ENCODE measurements at regions of chrX and their contacts with region 1.

Region 1: DNA sequence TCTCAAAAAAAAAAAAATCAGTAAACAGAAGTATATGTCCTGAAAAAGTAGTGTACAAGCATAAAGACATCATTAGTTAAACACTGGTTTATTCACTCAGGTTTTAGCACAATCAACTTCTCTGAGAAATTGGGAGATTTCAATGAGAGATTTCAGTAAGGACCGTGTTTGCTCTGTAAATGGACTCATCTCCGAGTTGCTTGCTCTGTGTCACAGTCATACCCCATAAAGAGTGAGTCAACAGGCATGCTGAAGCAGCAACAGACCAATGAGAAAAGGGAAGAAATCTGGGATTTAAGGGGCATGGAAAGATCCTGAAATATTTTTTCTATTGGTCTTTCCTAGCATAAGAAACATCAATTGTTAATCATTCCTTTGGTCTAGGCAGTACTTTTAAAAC is 4.7 kb downstream of the GLUD2 start:
- DNase-seq: no peak
- ATAC-seq: no peak
- H3K4me3 ChIP-seq: no peak overlapping the region
- H3K27ac ChIP-seq: no peak overlapping the region
- H3K4me1 ChIP-seq: no peaks in the 10 kb centered on the region
- H3K27me3 ChIP-seq: no peaks in the 10 kb centered on the region
- CTCF ChIP-seq: no peak

Region 2: GRCh38 chrX:120790118-120790517 is 262.0 kb before region 1 on chrX:
- intact Hi-C with region 1: loop called in 1 of 10 experiments (anchors 10 kb)
- DNase-seq: peak in 1 of 2 donors; percentile 40
- ATAC-seq: peak in 7 of 8 donors; percentile 48 to 86 (median 61)
- H3K4me3 ChIP-seq: no peak overlapping the region
- H3K27ac ChIP-seq: peak overlapping the region in 4 of 10 donors; percentile 12 to 43 (median 14)
- H3K4me1 ChIP-seq: peaks cover 0 to 13% (median under 1%) of the 10 kb centered on the region in 9 donors
- H3K27me3 ChIP-seq: peaks cover 0 to 3% (median 0%) of the 10 kb centered on the region in 7 donors
- CTCF ChIP-seq: peak; percentile 47 to 90 (median 72)

Measured in heart right ventricle (tissue), 16 donors.